ENCODE measurements at regions of chr17 and their contacts with region 1.

Region 1: DNA sequence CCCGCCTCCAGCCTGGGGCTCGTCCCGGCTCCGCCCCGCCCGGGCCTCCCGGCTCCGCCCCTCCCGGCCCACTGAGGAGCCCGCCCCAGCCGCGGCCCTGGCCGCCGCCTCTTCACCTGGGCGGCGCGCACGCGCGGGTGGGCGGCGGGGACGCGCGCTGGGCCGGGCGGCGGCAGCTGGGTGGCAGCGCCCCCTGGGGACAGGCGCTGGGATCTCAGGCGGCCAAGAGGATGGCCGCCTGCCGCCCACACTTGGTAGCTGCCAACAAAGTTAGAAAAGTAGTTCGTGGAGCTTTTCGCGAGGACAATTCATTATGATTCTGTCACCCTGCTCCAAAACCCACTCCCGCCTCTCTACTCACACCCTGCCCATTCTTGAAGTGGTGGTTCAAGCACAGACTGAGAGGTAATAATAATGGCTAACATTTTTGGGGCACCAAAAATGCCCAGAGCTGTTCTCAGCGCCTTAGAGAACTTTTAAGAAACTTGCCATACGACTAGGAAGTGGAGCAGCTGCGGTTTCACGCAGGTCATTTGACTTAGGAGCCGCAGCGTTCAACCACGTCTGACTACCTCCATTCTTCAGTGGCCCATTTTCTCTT is 340 bp upstream of the MYO1D start:
- DNase-seq: peak; percentile 89 to 97 (median 93)
- ATAC-seq: peak; percentile 93
- H3K4me3 ChIP-seq: peak overlapping the region; percentile 66 to 81
- H3K27ac ChIP-seq: peak overlapping the region; percentile 83 to 93
- H3K4me1 ChIP-seq: peaks cover 11 to 23% of the 10 kb centered on the region in 2 donors
- H3K27me3 ChIP-seq: peaks cover 0 to 25% of the 10 kb centered on the region in 2 donors
- CTCF ChIP-seq: peak; percentile 82 to 84

Region 2: GRCh38 chr17:32783602-32784001 is 93.7 kb before region 1 on chr17:
- intact Hi-C with region 1: loop called in 1 of 2 experiments (anchors 5 kb)
- DNase-seq: peak in 2 of 4 donors; percentile 38 to 59
- ATAC-seq: peak; percentile 89
- H3K4me3 ChIP-seq: no peak overlapping the region
- H3K27ac ChIP-seq: no peak overlapping the region
- H3K4me1 ChIP-seq: no peaks in the 10 kb centered on the region
- H3K27me3 ChIP-seq: no peaks in the 10 kb centered on the region
- CTCF ChIP-seq: peak; percentile 61 to 62

Measured in left lung (tissue), 14 donors.